PC-3 (cell line): ENCODE measurements at regions of chr11 and their contacts with region 1.

Region 1: DNA sequence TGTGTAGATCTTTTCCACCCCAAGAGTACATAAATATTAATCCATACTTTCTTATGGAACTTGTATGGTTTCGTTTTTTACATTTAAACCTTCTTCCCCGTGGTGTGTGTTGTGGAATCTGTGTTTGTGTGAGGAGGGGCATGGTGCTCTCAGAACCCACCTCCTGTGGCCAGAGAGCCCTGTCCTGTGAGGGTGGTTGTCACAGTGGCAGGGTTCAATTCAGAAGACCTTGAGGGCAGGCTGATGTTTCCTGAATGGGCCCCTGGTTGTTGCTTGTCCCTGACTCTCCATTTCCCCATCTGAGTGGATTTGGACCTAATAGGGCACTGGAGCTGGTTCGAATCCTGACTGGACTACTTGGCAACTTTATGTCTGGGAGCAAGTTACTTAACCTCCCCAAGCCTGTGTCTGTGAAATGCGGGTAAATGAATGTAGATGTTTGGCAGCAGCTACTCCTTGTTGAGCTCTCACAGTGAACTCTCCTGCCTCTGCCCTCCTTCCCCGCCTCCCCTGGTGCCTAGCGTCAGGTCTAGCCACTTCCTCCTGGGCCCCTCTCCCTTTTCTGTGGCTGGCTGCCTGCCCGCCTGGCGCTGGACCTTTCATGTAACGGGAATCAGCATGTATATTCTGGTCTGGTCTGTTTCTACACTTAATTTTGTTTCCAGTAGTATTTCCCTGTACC is 7.3 kb downstream of the NEAT1 start:
- DNase-seq: peak; percentile 37
- ATAC-seq: peak; percentile 0; the same call in 1 of the 2 replicates
- H3K4me3 ChIP-seq: no peak overlapping the region
- H3K27ac ChIP-seq: 0 out of 2 replicates have a peak overlapping the region, but pooled peaks have one; percentile 2
- H3K4me1 ChIP-seq: peaks cover 22% of the 10 kb centered on the region
- H3K27me3 ChIP-seq: no peaks in the 10 kb centered on the region
- CTCF ChIP-seq: no peak

Region 2: DNA sequence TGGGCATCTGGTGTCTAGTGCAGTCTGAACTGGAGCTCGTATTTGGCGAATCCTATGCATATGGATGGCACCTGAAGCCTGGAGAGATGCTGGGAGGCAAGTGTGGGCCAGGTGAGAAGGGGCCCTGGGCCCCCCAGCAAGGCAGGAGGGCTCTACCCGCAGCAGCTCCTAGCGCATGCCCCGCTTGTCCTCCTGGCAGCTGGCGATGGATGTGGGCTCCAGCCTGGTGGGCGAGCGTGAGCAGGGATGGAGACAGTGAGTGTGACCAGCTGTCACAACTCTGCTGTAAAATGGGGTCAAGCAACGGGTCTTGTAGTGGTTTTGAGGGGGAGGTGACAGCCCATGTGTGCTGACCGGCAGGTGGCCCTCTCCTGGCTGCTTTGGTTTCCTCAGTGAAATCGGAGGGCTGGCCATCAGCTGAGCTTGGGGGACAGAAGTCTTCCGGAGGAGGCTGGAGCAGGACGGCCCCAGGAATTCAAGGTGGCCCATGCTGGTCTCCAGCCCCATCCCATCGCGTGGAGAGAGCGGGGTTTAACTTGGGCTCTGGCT is 31.4 kb before region 1 on chr11:
- CTCF ChIA-PET with region 1: no interaction called
- POLR2A ChIA-PET with region 1: interaction called, 10 read pairs
- intact Hi-C with region 1: no loop called
- DNase-seq: no peak
- ATAC-seq: no peak
- H3K4me3 ChIP-seq: no peak overlapping the region
- H3K27ac ChIP-seq: no peak overlapping the region
- H3K4me1 ChIP-seq: no peaks in the 10 kb centered on the region
- H3K27me3 ChIP-seq: no peaks in the 10 kb centered on the region
- CTCF ChIP-seq: no peak

Region 3: DNA sequence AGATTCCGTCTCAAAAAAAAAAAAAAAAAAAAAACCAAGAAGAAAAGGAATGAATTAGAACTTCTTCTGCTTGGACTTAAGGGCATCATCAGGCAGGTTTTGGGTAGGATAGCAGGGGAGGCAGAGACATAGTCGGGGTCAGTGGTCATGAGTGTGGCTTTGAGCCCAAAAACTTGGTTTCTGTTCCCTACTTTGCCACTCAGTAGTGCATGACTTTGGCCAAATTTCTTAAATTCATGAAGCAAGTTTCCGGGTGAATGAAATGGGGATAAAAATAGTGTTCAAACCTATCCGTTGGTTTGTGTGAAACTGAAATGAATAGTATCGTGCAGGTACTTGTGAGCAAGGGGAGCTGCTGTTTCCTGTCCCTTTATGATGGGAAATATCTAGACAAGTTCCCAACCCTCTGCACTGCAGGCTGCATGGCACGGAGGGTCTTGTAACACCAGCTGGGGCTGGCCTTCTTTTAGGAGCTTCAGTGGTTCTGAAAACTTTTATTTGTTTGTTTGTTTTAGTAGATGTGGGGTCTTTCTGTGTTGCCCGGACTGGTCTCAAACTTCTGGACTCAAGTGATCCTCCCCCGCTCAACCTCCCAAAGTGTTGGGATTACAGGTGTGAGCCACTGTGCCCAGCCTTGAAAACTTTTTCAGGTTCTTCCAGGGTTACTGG is 11.1 kb after region 1 on chr11:
- CTCF ChIA-PET with region 1: no interaction called
- POLR2A ChIA-PET with region 1: interaction called, 15 read pairs
- intact Hi-C with region 1: no loop called
- DNase-seq: peak; percentile 4
- ATAC-seq: no peak
- H3K4me3 ChIP-seq: no peak overlapping the region
- H3K27ac ChIP-seq: no peak overlapping the region
- H3K4me1 ChIP-seq: no peaks in the 10 kb centered on the region
- H3K27me3 ChIP-seq: no peaks in the 10 kb centered on the region
- CTCF ChIP-seq: no peak